ENCODE measurements at regions of chr1 and their contacts with region 1.

Region 1: DNA sequence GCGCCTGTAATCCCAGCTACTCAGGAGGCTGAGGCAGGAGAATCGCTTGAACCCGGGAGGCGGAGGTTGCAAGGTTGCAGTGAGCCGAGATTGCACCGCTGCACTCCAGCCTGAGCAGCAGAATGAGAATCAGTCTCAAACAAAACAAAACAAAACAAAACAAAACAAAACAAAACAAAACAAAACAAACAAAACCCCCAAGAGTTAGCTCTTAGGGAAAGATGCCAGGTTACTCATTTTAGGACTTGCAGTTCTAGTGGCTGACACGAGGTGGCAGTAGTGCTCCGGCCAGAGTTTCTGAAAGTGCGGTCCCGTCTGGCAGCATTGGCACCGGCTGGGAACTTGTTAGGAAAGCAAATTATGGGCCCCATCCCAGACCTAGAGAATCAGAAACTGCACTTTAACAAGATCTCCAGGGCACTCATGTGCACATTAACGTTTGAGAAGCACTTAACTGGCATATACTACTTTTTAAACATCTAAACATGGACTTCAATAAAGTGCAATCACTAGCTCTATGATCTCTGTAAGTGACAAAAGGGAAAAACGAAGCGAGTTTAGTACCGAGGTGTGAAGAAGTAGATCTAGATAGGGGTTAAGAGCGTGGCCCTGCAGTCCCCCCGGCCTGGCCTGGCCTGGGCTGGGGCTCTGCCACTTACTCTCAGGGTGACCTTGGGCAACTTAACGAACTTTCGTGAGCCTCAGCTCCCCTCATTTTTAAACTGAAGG is 41.9 kb upstream of the TNFRSF1B start:
- DNase-seq: peak; percentile 75 to 85 (median 82)
- H3K4me3 ChIP-seq: no peak overlapping the region
- H3K27ac ChIP-seq: no peak overlapping the region
- H3K4me1 ChIP-seq: peaks cover 0 to 3% (median 0%) of the 10 kb centered on the region in 3 donors
- H3K27me3 ChIP-seq: no peaks in the 10 kb centered on the region
- CTCF ChIP-seq: peak; percentile 98

Region 2: GRCh38 chr1:12208764-12209494 is 84.1 kb after region 1 on chr1:
- intact Hi-C with region 1: loop called (anchors 5 kb)
- DNase-seq: peak; percentile 91 to 93 (median 92)
- H3K4me3 ChIP-seq: no peak overlapping the region
- H3K27ac ChIP-seq: no peak overlapping the region
- H3K4me1 ChIP-seq: no peaks in the 10 kb centered on the region
- H3K27me3 ChIP-seq: no peaks in the 10 kb centered on the region
- CTCF ChIP-seq: peak; percentile 92

Measured in kidney (tissue), 22 donors.